ENCODE measurements at regions of chr14 and their contacts with region 1.

Region 1: DNA sequence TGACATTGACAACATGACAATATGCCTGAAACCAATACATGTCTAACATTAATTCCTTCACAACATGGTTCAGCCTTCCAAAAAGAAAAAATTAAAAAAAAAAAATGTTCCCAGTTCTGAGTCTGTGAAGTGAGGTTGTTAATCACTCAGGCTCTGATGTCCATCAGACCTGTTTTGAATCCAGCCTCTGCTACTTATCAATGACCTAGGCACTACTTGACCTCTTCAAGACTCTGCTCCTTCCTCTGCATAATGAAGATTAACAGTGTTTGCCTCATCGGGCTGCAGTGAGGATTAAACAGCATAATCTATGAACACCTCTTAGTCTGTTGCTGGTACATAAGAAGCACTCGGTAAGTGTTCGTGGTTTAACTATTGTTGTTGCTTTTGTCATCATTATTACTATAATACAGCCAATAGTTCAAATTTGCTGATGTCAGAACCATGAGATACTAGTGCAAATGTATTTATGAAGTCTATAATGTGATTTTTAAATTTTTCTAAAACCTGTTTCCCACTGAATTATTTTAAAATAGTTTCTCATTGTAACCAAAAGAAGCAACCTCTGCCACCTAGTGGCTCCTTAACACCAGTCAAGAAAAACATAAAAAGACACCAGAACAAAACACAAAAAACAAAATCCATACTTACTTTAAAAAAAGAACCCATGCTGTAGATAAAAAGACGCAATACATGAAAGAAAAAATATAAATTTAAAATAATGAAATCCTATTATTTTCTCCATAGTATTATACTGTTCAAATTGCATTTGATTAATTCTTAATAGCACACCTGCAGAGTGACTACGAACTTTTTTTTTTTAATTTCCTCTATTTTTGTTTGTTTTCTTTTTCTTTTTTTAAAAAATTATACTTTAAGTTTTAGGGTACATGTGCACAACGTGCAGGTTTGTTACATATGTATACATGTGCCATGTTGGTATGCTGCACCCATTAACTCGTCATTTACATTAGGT is 20.3 kb upstream of the TMX1 start:
- DNase-seq: peak; percentile 10 to 50
- ATAC-seq: no peak
- H3K4me3 ChIP-seq: no peak overlapping the region
- H3K27ac ChIP-seq: 0 out of 6 replicates have a peak overlapping the region, but pooled peaks of 1 of the 2 experiments have one; percentile 0
- H3K4me1 ChIP-seq: no peaks in the 10 kb centered on the region
- CTCF ChIP-seq: peak; percentile 83
- EP300 ChIP-seq: no peak
- POLR2A ChIP-seq: no peak
- RAD21 ChIP-seq: peak; percentile 76 to 82

Region 2: GRCh38 chr14:51053157-51053556 is 166.6 kb before region 1 on chr14:
- CTCF ChIA-PET with region 1: no interaction called
- POLR2A ChIA-PET with region 1: no interaction called
- DNase-seq: no peak
- ATAC-seq: no peak
- H3K4me3 ChIP-seq: no peak overlapping the region
- H3K27ac ChIP-seq: no peak overlapping the region
- H3K4me1 ChIP-seq: no peaks in the 10 kb centered on the region
- CTCF ChIP-seq: no peak
- EP300 ChIP-seq: no peak
- POLR2A ChIP-seq: no peak
- RAD21 ChIP-seq: no peak

Region 3: GRCh38 chr14:51205486-51205885 is 14.3 kb before region 1 on chr14:
- CTCF ChIA-PET with region 1: interaction called, 17 read pairs
- POLR2A ChIA-PET with region 1: no interaction called
- DNase-seq: no peak
- ATAC-seq: no peak
- H3K4me3 ChIP-seq: no peak overlapping the region
- H3K27ac ChIP-seq: no peak overlapping the region
- H3K4me1 ChIP-seq: no peaks in the 10 kb centered on the region
- CTCF ChIP-seq: no peak
- EP300 ChIP-seq: no peak
- POLR2A ChIP-seq: no peak
- RAD21 ChIP-seq: no peak

Measured in A549 (cell line).